WTC11 (cell line): ENCODE measurements at regions of chr1 and their contacts with region 1.

Region 1: GRCh38 chr1:101309334-101310311 is 72.8 kb downstream of the S1PR1 start:
- DNase-seq: peak; percentile 51
- ATAC-seq: peak; percentile 77
- H3K4me3 Mint-ChIP-seq: peak overlapping the region; percentile 82
- H3K27ac Mint-ChIP-seq: peak overlapping the region; percentile 93
- H3K4me1 Mint-ChIP-seq: peaks cover 35% of the 10 kb centered on the region
- H3K27me3 Mint-ChIP-seq: peaks cover 51% of the 10 kb centered on the region
- CTCF ChIP-seq: peak; percentile 71

Region 2: GRCh38 chr1:101136739-101137138 is 172.9 kb before region 1 on chr1:
- CTCF ChIA-PET with region 1: interaction called, 10 read pairs
- POLR2A ChIA-PET with region 1: no interaction called
- DNase-seq: no peak
- ATAC-seq: peak; percentile 76
- H3K4me3 Mint-ChIP-seq: peak overlapping the region; percentile 51
- H3K27ac Mint-ChIP-seq: peak overlapping the region; percentile 35; the same call in 1 of the 2 replicates
- H3K4me1 Mint-ChIP-seq: peaks cover 40% of the 10 kb centered on the region
- H3K27me3 Mint-ChIP-seq: no peaks in the 10 kb centered on the region
- CTCF ChIP-seq: no peak

Region 3: GRCh38 chr1:101338714-101339430 is 29.2 kb after region 1 on chr1:
- CTCF ChIA-PET with region 1: interaction called, 13 read pairs
- POLR2A ChIA-PET with region 1: no interaction called
- DNase-seq: no peak
- ATAC-seq: no peak
- H3K4me3 Mint-ChIP-seq: no peak overlapping the region
- H3K27ac Mint-ChIP-seq: no peak overlapping the region
- H3K4me1 Mint-ChIP-seq: peaks cover 7% of the 10 kb centered on the region; the same call in 1 of the 2 replicates
- H3K27me3 Mint-ChIP-seq: no peaks in the 10 kb centered on the region
- CTCF ChIP-seq: no peak

Region 4: GRCh38 chr1:101438359-101438758 is 128.7 kb after region 1 on chr1:
- CTCF ChIA-PET with region 1: interaction called, 40 read pairs
- POLR2A ChIA-PET with region 1: no interaction called
- DNase-seq: no peak
- ATAC-seq: peak; percentile 81
- H3K4me3 Mint-ChIP-seq: no peak overlapping the region
- H3K27ac Mint-ChIP-seq: no peak overlapping the region
- H3K4me1 Mint-ChIP-seq: peaks cover 39% of the 10 kb centered on the region
- H3K27me3 Mint-ChIP-seq: no peaks in the 10 kb centered on the region
- CTCF ChIP-seq: no peak

Region 5: GRCh38 chr1:101474039-101474665 is 164.5 kb after region 1 on chr1:
- CTCF ChIA-PET with region 1: interaction called, 17 read pairs
- POLR2A ChIA-PET with region 1: no interaction called
- DNase-seq: peak; percentile 21
- ATAC-seq: peak; percentile 92
- H3K4me3 Mint-ChIP-seq: no peak overlapping the region
- H3K27ac Mint-ChIP-seq: no peak overlapping the region
- H3K4me1 Mint-ChIP-seq: no peaks in the 10 kb centered on the region
- H3K27me3 Mint-ChIP-seq: no peaks in the 10 kb centered on the region
- CTCF ChIP-seq: peak; percentile 52; the same call in 1 of the 2 replicates

Region 6: DNA sequence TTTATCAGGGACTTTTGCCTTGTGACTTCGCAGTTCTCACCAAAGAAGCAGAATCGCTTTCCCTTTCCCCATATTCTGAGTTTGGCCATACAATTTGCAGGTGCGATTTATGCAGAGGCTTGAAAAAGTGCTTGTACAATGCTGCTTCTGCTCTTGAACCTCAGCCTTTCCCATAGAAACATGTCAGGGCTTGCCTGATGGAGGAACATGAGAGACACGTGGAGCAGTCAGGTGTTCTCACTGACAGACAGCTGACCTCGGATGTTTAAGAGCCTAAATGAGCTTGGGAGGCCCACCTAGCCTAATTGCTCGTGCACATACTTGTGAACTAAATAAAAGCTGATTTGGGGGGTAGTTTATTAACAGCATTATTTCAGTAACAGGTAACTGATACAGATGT is 217.2 kb after region 1 on chr1:
- CTCF ChIA-PET with region 1: no interaction called
- POLR2A ChIA-PET with region 1: no interaction called
- DNase-seq: no peak
- ATAC-seq: no peak
- H3K4me3 Mint-ChIP-seq: no peak overlapping the region
- H3K27ac Mint-ChIP-seq: no peak overlapping the region; the same call in 1 of the 2 replicates
- H3K4me1 Mint-ChIP-seq: peaks cover 4% of the 10 kb centered on the region
- H3K27me3 Mint-ChIP-seq: no peaks in the 10 kb centered on the region; the same call in 1 of the 2 replicates
- CTCF ChIP-seq: no peak